Endothelial cell of umbilical vein (primary cell): ENCODE measurements at regions of chr1 and their contacts with region 1.

Region 1: DNA sequence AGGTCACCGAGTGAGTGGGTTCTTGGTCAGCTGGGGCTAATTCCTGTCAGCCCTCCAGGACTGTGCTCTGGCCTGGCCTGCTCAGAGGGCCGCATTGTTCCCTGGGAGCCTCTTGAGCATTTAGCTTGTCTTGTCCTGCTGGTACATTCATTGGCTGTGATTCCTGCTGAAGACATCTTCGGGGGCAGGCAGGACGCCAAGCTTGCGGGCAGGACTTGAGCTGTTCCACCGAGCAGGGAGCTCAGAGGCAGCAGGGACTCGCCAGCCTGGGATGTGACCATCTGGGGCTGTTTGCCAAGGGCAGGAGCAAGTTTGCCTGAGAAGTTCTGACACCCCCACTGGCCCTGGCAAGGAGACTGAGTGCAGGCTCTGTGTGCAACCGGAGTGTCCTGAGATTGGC is 7.0 kb upstream of the SLC26A9 start:
- DNase-seq: no peak
- H3K4me3 ChIP-seq: no peak overlapping the region
- H3K27ac ChIP-seq: no peak overlapping the region
- H3K4me1 ChIP-seq: peaks cover 11% of the 10 kb centered on the region
- H3K27me3 ChIP-seq: peaks cover 14 to 19% of the 10 kb centered on the region in 2 experiments
- CTCF ChIP-seq: no peak
- POLR2A ChIP-seq: no peak

Region 2: DNA sequence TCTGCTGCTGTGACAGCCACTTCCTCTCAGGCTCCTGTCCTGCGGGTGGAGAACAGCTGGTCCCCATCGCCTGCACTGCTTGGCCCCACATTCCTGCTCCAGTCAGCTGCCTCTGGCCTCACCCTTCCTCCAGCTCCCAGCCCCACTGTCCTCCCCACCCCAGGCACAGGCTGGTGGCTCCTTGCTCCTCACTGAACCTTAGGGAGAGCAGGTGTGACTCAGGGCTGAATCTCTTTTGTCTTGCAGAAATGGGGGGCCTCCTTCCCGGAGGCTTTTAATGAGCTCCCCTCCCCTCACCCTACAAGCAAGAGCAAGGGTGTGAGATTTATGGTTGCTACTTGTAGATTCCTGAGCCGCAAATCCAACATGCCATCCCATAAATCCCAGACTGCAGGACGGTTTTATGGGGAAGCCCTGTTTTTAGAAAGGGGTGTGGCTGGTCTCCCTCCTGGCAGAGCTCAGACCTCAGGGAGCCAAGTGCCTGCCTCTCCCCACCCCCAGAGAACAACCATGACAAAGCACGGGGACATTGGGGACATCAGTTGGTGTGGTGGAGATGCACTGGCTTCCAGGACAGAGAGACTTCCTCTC is 430.6 kb before region 1 on chr1:
- CTCF ChIA-PET with region 1: no interaction called
- POLR2A ChIA-PET with region 1: no interaction called
- dilution Hi-C with region 1: no loop called
- intact Hi-C with region 1: no loop called
- DNase-seq: no peak
- H3K4me3 ChIP-seq: no peak overlapping the region
- H3K27ac ChIP-seq: no peak overlapping the region
- H3K4me1 ChIP-seq: no peaks in the 10 kb centered on the region
- H3K27me3 ChIP-seq: peaks cover 0 to 4% of the 10 kb centered on the region in 2 experiments
- CTCF ChIP-seq: no peak
- POLR2A ChIP-seq: no peak

Region 3: GRCh38 chr1:205939690-205940330 is 10.5 kb before region 1 on chr1:
- CTCF ChIA-PET with region 1: interaction called, 3 read pairs
- POLR2A ChIA-PET with region 1: no interaction called
- dilution Hi-C with region 1: no loop called
- intact Hi-C with region 1: loop called (anchors 2 kb)
- DNase-seq: no peak
- H3K4me3 ChIP-seq: no peak overlapping the region
- H3K27ac ChIP-seq: no peak overlapping the region
- H3K4me1 ChIP-seq: peaks cover 14% of the 10 kb centered on the region
- H3K27me3 ChIP-seq: peaks cover 5 to 10% of the 10 kb centered on the region in 2 experiments
- CTCF ChIP-seq: peak in 1 of 2 donors; percentile 35
- POLR2A ChIP-seq: no peak

Region 4: GRCh38 chr1:205961405-205961804 is 11.1 kb after region 1 on chr1:
- CTCF ChIA-PET with region 1: interaction called, 11 read pairs
- POLR2A ChIA-PET with region 1: no interaction called
- dilution Hi-C with region 1: no loop called
- intact Hi-C with region 1: no loop called
- DNase-seq: peak; percentile 42
- H3K4me3 ChIP-seq: no peak overlapping the region
- H3K27ac ChIP-seq: no peak overlapping the region
- H3K4me1 ChIP-seq: peaks cover 19% of the 10 kb centered on the region
- H3K27me3 ChIP-seq: peaks cover 6 to 14% of the 10 kb centered on the region in 2 experiments
- CTCF ChIP-seq: no peak
- POLR2A ChIP-seq: no peak

Region 5: GRCh38 chr1:206102292-206102936 is 152.1 kb after region 1 on chr1:
- CTCF ChIA-PET with region 1: no interaction called
- POLR2A ChIA-PET with region 1: no interaction called
- dilution Hi-C with region 1: no loop called
- intact Hi-C with region 1: no loop called
- DNase-seq: peak; percentile 42
- H3K4me3 ChIP-seq: no peak overlapping the region
- H3K27ac ChIP-seq: no peak overlapping the region
- H3K4me1 ChIP-seq: peaks cover 5% of the 10 kb centered on the region
- H3K27me3 ChIP-seq: peaks cover 0 to 26% of the 10 kb centered on the region in 2 experiments
- CTCF ChIP-seq: no peak
- POLR2A ChIP-seq: no peak